ENCODE measurements at regions of chr1 and their contacts with region 1.

Region 1: GRCh38 chr1:8439015-8439702 is 121.2 kb downstream of the SLC45A1 start:
- DNase-seq: peak in 1 of 2 experiments; percentile 71
- H3K4me3 ChIP-seq: no peak overlapping the region
- H3K27ac ChIP-seq: peak overlapping the region; percentile 31; the same call in 1 of the 2 replicates
- H3K4me1 ChIP-seq: peaks cover 6 to 24% (median 21%) of the 10 kb centered on the region in 4 experiments; a peak in 6 of 7 replicates
- H3K27me3 ChIP-seq: no peaks in the 10 kb centered on the region
- CTCF ChIP-seq: peak; percentile 35 to 63 (median 37); a peak in 3 of 4 replicates
- EP300 ChIP-seq: no peak
- POLR2A ChIP-seq: no peak
- RAD21 ChIP-seq: peak; percentile 25 to 49; a peak in 3 of 4 replicates

Region 2: GRCh38 chr1:8374812-8375211 is 64.3 kb before region 1 on chr1:
- CTCF ChIA-PET with region 1: interaction called, 12 read pairs
- POLR2A ChIA-PET with region 1: interaction called, 5 read pairs
- DNase-seq: no peak
- H3K4me3 ChIP-seq: no peak overlapping the region
- H3K27ac ChIP-seq: 0 out of 2 replicates have a peak overlapping the region, but pooled peaks have one; percentile 11
- H3K4me1 ChIP-seq: peaks cover 28 to 43% (median 41%) of the 10 kb centered on the region in 4 experiments
- H3K27me3 ChIP-seq: no peaks in the 10 kb centered on the region
- CTCF ChIP-seq: peak; percentile 47 to 79 (median 56)
- EP300 ChIP-seq: no peak
- POLR2A ChIP-seq: no peak
- RAD21 ChIP-seq: peak; percentile 57 to 66; a peak in 3 of 4 replicates

Region 3: GRCh38 chr1:8409106-8409505 is 30.1 kb before region 1 on chr1:
- CTCF ChIA-PET with region 1: interaction called, 10 read pairs
- POLR2A ChIA-PET with region 1: no interaction called
- DNase-seq: no peak
- H3K4me3 ChIP-seq: no peak overlapping the region
- H3K27ac ChIP-seq: peak overlapping the region; percentile 47; the same call in 1 of the 2 replicates
- H3K4me1 ChIP-seq: peaks cover 23 to 47% (median 32%) of the 10 kb centered on the region in 4 experiments
- H3K27me3 ChIP-seq: no peaks in the 10 kb centered on the region
- CTCF ChIP-seq: peak in 2 of 3 experiments; percentile 1 to 51; a peak in 2 of 4 replicates
- EP300 ChIP-seq: no peak
- POLR2A ChIP-seq: no peak
- RAD21 ChIP-seq: peak; percentile 16 to 28; a peak in 3 of 4 replicates

Region 4: GRCh38 chr1:8423650-8424538 is 15.3 kb before region 1 on chr1:
- CTCF ChIA-PET with region 1: interaction called, 88 read pairs
- POLR2A ChIA-PET with region 1: interaction called, 5 read pairs
- DNase-seq: peak; percentile 41 to 87
- H3K4me3 ChIP-seq: peak overlapping the region; percentile 64 to 88 (median 72)
- H3K27ac ChIP-seq: peak overlapping the region; percentile 73
- H3K4me1 ChIP-seq: peaks cover 15 to 22% (median 21%) of the 10 kb centered on the region in 4 experiments
- H3K27me3 ChIP-seq: no peaks in the 10 kb centered on the region
- CTCF ChIP-seq: no peak
- EP300 ChIP-seq: no peak
- POLR2A ChIP-seq: no peak
- RAD21 ChIP-seq: peak; percentile 7 to 13; a peak in 1 of 4 replicates

Region 5: GRCh38 chr1:8456308-8456912 is 17.3 kb after region 1 on chr1:
- CTCF ChIA-PET with region 1: interaction called, 27 read pairs
- POLR2A ChIA-PET with region 1: no interaction called
- DNase-seq: no peak
- H3K4me3 ChIP-seq: no peak overlapping the region
- H3K27ac ChIP-seq: no peak overlapping the region
- H3K4me1 ChIP-seq: peaks cover 3 to 22% (median 17%) of the 10 kb centered on the region in 4 experiments; a peak in 6 of 7 replicates
- H3K27me3 ChIP-seq: no peaks in the 10 kb centered on the region
- CTCF ChIP-seq: no peak
- EP300 ChIP-seq: no peak
- POLR2A ChIP-seq: no peak
- RAD21 ChIP-seq: no peak